ENCODE measurements at regions of chr2 and their contacts with region 1.

Region 1: GRCh38 chr2:162037028-162037795 is 36.8 kb downstream of the DPP4 start:
- DNase-seq: no peak
- H3K4me3 ChIP-seq: no peak overlapping the region
- H3K27ac ChIP-seq: peak overlapping the region; percentile 27 to 46
- H3K4me1 ChIP-seq: no peaks in the 10 kb centered on the region
- H3K27me3 ChIP-seq: no peaks in the 10 kb centered on the region
- CTCF ChIP-seq: no peak
- POLR2A ChIP-seq: no peak

Region 2: GRCh38 chr2:160429248-160430000 is 1607.8 kb before region 1 on chr2:
- intact Hi-C with region 1: loop called (anchors 10 kb)
- DNase-seq: no peak
- H3K4me3 ChIP-seq: no peak overlapping the region
- H3K27ac ChIP-seq: peak overlapping the region; percentile 20 to 35
- H3K4me1 ChIP-seq: peaks cover 0 to 5% of the 10 kb centered on the region in 2 donors
- H3K27me3 ChIP-seq: no peaks in the 10 kb centered on the region
- CTCF ChIP-seq: peak; percentile 22 to 62 (median 60)
- POLR2A ChIP-seq: no peak

Region 3: DNA sequence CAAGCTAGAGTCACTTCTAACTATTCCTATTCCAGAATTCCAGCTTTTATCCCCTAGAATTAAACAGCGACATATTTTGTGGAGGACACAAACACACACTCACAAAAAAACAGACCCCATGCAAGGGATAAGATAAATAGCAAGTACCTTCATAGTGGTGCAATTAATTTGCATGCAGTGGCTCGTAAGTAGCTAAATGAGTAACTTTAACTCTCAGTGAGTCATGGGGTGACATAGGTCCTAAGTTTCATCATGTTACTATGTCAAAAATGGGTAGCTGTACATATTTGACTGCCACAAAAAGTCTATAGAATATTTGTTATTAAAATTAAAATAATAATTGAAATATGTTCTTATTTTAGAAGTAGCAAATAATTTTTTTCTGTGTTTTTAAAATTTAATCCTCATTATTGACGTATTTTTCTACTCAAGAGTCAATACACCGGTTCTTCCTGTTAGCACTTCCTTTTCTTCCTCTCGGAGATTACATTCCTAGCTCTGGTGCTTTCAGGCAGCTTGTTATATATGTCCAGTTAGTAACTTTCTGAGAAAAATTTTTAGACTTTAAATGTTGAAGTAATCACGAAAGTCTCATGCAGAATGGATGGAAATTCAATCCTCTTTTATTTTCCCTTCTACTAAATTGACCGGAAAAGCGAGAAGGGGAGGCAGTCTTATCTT is 554.3 kb after region 1 on chr2:
- intact Hi-C with region 1: no loop called
- DNase-seq: no peak
- H3K4me3 ChIP-seq: no peak overlapping the region
- H3K27ac ChIP-seq: no peak overlapping the region
- H3K4me1 ChIP-seq: no peaks in the 10 kb centered on the region
- H3K27me3 ChIP-seq: no peaks in the 10 kb centered on the region
- CTCF ChIP-seq: no peak
- POLR2A ChIP-seq: no peak